ENCODE measurements at regions of chr1 and their contacts with region 1.

Region 1: DNA sequence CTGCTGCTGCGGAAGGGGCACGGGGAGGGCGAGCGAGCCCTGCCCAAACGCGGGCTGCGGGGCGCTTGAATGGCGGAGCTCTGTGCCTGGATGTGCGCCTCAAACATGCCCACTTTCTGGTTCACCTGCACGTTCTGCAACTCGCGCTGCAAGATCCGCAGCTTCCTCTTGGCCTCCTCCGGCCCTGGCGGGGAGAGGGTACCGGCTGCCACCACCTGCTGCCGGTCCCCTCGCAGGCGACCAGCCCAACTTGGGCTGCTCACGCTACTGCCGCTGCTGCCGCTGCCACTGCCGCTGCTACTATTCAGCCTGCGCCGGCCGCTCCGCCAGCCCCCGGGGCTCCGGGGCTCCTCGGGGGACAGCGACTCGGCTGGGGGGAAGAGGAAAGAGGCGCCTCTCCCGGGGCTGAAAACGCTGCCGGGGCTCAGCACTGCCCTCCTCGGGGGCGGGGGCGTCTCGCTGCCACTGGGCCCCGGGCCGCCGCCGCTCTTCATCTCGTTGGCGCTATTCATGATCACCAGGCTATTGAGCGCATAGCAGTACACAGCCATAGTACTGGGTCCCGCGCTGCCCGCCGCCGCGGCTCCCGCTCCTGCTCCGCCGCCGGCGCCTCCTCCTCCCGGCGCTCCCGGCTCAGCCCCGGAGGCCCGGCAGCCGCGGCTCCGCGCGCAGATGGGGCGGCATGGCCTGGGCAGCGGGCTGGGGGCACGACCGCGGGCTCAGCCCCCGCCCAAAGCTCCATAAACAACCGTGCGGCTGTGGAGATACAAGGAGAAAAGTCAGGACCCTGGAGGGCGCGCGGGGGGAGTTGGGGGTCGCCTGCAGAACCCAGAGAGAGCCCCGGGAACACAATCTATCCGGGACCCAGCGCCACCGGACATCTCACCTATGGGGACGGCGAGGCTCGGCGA is 1.9 kb downstream of the ITPKB start:
- DNase-seq: peak; percentile 23
- ATAC-seq: peak; percentile 73
- H3K4me3 ChIP-seq: peak overlapping the region; percentile 70
- H3K27ac ChIP-seq: peak overlapping the region; percentile 10; the same call in 1 of the 2 replicates
- H3K4me1 ChIP-seq: peaks cover 2% of the 10 kb centered on the region; the same call in 1 of the 2 replicates
- H3K27me3 ChIP-seq: peaks cover 2% of the 10 kb centered on the region; the same call in 1 of the 2 replicates
- CTCF ChIP-seq: no peak
- POLR2A ChIP-seq: no peak
- RAD21 ChIP-seq: no peak

Region 2: GRCh38 chr1:226634166-226634588 is 103.0 kb before region 1 on chr1:
- CTCF ChIA-PET with region 1: no interaction called
- POLR2A ChIA-PET with region 1: no interaction called
- dilution Hi-C with region 1: no loop called
- in situ Hi-C with region 1: loop called (anchors 10 kb)
- intact Hi-C with region 1: loop called (anchors 2 kb)
- DNase-seq: peak; percentile 59
- ATAC-seq: peak; percentile 95
- H3K4me3 ChIP-seq: no peak overlapping the region
- H3K27ac ChIP-seq: no peak overlapping the region
- H3K4me1 ChIP-seq: no peaks in the 10 kb centered on the region
- H3K27me3 ChIP-seq: no peaks in the 10 kb centered on the region; the same call in 1 of the 2 replicates
- CTCF ChIP-seq: peak; percentile 91
- POLR2A ChIP-seq: no peak
- RAD21 ChIP-seq: peak; percentile 97

Region 3: GRCh38 chr1:226662642-226663326 is 74.4 kb before region 1 on chr1:
- CTCF ChIA-PET with region 1: interaction called, 3 read pairs
- POLR2A ChIA-PET with region 1: no interaction called
- dilution Hi-C with region 1: no loop called
- in situ Hi-C with region 1: no loop called
- intact Hi-C with region 1: loop called (anchors 5 kb)
- DNase-seq: peak; percentile 100
- ATAC-seq: peak; percentile 93
- H3K4me3 ChIP-seq: no peak overlapping the region
- H3K27ac ChIP-seq: peak overlapping the region; percentile 63
- H3K4me1 ChIP-seq: peaks cover 26% of the 10 kb centered on the region
- H3K27me3 ChIP-seq: no peaks in the 10 kb centered on the region
- CTCF ChIP-seq: no peak
- POLR2A ChIP-seq: no peak; the same call in 1 of the 2 replicates
- RAD21 ChIP-seq: no peak; the same call in 1 of the 2 replicates

Region 4: GRCh38 chr1:226702957-226703831 is 34.0 kb before region 1 on chr1:
- CTCF ChIA-PET with region 1: no interaction called
- POLR2A ChIA-PET with region 1: no interaction called
- dilution Hi-C with region 1: no loop called
- in situ Hi-C with region 1: no loop called
- intact Hi-C with region 1: loop called (anchors 2 kb)
- DNase-seq: peak; percentile 94
- ATAC-seq: peak; percentile 77
- H3K4me3 ChIP-seq: peak overlapping the region; percentile 52
- H3K27ac ChIP-seq: peak overlapping the region; percentile 99
- H3K4me1 ChIP-seq: peaks cover 6% of the 10 kb centered on the region
- H3K27me3 ChIP-seq: no peaks in the 10 kb centered on the region
- CTCF ChIP-seq: no peak
- POLR2A ChIP-seq: peak; percentile 70
- RAD21 ChIP-seq: no peak

Region 5: GRCh38 chr1:226723657-226724532 is 13.3 kb before region 1 on chr1:
- CTCF ChIA-PET with region 1: no interaction called
- POLR2A ChIA-PET with region 1: no interaction called
- dilution Hi-C with region 1: no loop called
- in situ Hi-C with region 1: no loop called
- intact Hi-C with region 1: no loop called
- DNase-seq: peak; percentile 73
- ATAC-seq: peak; percentile 89
- H3K4me3 ChIP-seq: no peak overlapping the region
- H3K27ac ChIP-seq: peak overlapping the region; percentile 35; the same call in 1 of the 2 replicates
- H3K4me1 ChIP-seq: peaks cover 9% of the 10 kb centered on the region; the same call in 1 of the 2 replicates
- H3K27me3 ChIP-seq: no peaks in the 10 kb centered on the region
- CTCF ChIP-seq: no peak
- POLR2A ChIP-seq: no peak
- RAD21 ChIP-seq: no peak

Region 6: GRCh38 chr1:226820941-226821718 is 84.0 kb after region 1 on chr1:
- CTCF ChIA-PET with region 1: no interaction called
- POLR2A ChIA-PET with region 1: no interaction called
- dilution Hi-C with region 1: no loop called
- in situ Hi-C with region 1: no loop called
- intact Hi-C with region 1: loop called (anchors 5 kb)
- DNase-seq: peak; percentile 100
- ATAC-seq: peak; percentile 94
- H3K4me3 ChIP-seq: no peak overlapping the region
- H3K27ac ChIP-seq: peak overlapping the region; percentile 36; the same call in 1 of the 2 replicates
- H3K4me1 ChIP-seq: peaks cover 5% of the 10 kb centered on the region; the same call in 1 of the 2 replicates
- H3K27me3 ChIP-seq: no peaks in the 10 kb centered on the region
- CTCF ChIP-seq: no peak
- POLR2A ChIP-seq: no peak
- RAD21 ChIP-seq: peak; percentile 33; the same call in 1 of the 2 replicates

Region 7: GRCh38 chr1:226940029-226940805 is 203.1 kb after region 1 on chr1 and contains the start of gene COQ8A:
- CTCF ChIA-PET with region 1: no interaction called
- POLR2A ChIA-PET with region 1: no interaction called
- dilution Hi-C with region 1: no loop called
- in situ Hi-C with region 1: no loop called
- intact Hi-C with region 1: no loop called
- DNase-seq: peak; percentile 99
- ATAC-seq: peak; percentile 97
- H3K4me3 ChIP-seq: peak within 1 kb of the TSS; percentile 57
- H3K27ac ChIP-seq: peak within 1 kb of the TSS; percentile 85
- H3K4me1 ChIP-seq: peaks cover 3% of the 10 kb centered on the region
- H3K27me3 ChIP-seq: no peaks in the 10 kb centered on the region
- CTCF ChIP-seq: no peak
- POLR2A ChIP-seq: no peak
- RAD21 ChIP-seq: no peak
- total RNA-seq, gene COQ8A: 3.3 and 3.8 TPM in 2 replicates

Region 8: DNA sequence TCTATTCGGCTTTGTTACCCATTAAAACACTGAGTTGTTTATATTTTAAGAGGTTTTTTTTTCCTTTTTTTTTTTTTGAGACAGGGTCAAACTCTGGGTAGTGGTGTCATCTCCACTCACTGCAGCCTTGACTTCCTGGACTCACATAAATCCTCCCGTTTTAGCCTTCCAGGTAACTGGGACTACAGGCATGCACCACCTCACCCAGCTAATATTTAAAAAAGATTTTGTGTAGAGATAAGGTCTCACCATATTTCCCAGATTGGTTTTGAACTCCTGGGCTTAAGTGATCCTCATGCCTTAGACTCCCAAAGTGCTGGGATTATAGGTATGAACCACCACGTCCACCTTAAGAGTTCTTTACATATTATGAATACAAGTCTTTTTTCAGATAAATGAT is 349.5 kb after region 1 on chr1:
- CTCF ChIA-PET with region 1: no interaction called
- POLR2A ChIA-PET with region 1: no interaction called
- dilution Hi-C with region 1: no loop called
- in situ Hi-C with region 1: no loop called
- intact Hi-C with region 1: no loop called
- DNase-seq: no peak
- ATAC-seq: no peak
- H3K4me3 ChIP-seq: no peak overlapping the region
- H3K27ac ChIP-seq: no peak overlapping the region
- H3K4me1 ChIP-seq: no peaks in the 10 kb centered on the region
- H3K27me3 ChIP-seq: no peaks in the 10 kb centered on the region
- CTCF ChIP-seq: no peak
- POLR2A ChIP-seq: no peak
- RAD21 ChIP-seq: no peak

Measured in IMR-90 (cell line).